Left cardiac atrium (tissue), 4 donors: ENCODE measurements at regions of chr7 and their contacts with region 1.

Region 1: GRCh38 chr7:99990460-99990852 is 14.6 kb upstream of the AZGP1 start:
- DNase-seq: no peak
- ATAC-seq: no peak

Region 2: DNA sequence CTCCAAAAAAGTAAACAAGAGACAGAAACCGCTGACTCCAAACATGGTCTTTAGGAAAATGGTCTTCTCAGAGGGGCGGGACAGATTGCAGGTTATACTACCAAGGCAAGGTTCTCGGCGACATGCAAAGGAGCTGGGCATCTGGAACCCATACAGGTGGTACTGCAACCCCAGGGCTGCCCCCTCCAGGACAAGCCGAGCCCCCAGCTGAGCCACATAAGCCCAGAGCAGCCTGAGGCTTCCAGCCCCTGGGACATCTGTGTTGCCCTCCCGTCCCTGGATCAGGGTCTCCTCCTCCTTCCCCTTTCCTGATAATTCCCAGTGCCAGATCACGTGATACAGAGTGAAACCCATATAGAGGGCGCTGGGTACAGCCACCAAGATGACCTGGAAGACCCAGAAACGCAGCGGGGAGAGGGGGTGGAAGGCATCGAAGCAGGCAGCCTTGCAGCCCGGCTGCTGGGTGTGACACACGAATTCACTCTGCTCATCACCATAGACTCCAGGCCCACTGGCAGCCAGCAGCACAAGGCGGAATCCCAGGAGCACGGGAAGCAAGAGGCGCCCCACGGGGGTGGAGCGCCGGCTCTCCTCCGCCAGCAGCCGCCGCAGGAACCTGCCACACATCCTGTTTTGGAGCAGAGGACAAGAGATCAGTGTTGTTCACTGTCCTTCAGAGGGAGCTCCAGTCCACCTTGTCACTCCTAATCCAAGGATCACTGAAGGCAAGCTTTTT is 61.3 kb before region 1 on chr7 and contains the start of gene GJC3:
- intact Hi-C with region 1: loop called in 1 of 2 experiments (anchors 5 kb)
- DNase-seq: peak; percentile 74
- ATAC-seq: peak; percentile 92 to 97
- total RNA-seq, gene GJC3: 0.37 to 0.59 TPM

Region 3: GRCh38 chr7:100081535-100082102 is 91.2 kb after region 1 on chr7 and contains the start of gene ZNF3:
- intact Hi-C with region 1: loop called in 1 of 2 experiments (anchors 5 kb)
- DNase-seq: peak; percentile 98
- ATAC-seq: peak; percentile 96 to 98
- total RNA-seq, gene ZNF3: 14.6 to 17.3 TPM

Region 4: DNA sequence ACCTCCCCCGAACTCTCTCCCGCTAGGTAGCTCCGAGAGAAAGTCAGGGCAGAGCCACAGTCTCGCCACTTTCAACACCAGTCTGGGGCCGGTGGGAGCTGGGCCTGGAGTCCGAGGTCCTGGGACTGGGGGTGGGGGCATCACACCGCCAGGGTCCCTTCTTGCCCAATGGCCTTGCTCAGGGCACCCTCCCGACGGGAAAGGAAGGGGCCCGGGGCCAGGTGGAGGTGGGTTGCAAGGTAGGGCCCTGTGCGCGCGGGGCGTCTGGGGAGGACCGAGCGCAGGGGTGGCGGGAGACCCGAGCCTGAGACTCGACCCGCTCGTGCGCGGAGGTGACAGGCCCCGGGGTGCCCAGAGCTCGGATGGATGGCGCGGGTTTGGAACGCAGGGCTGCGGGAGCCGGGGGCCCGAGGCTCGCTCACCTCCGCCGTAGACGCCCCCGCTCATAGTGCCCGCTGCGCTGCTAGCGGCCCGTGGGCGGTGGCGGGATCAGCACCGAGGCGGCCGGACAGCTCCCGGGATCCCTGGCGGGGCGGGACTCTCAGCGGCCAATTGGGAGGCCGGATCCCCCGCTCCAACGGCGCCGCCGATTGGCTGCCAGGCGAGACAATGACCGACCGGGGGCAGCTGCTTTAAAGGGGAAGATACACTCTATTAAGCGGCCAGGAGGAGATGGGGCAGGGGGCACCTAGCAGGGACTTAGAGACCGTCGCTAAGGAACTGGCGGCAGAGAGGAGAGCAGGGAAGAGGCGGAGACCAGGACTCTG is 665.6 kb after region 1 on chr7 and contains the start of gene ACTL6B:
- intact Hi-C with region 1: no loop called
- DNase-seq: peak; percentile 60
- ATAC-seq: peak; percentile 74 to 76
- total RNA-seq, gene ACTL6B: not detected